Ascending aorta (tissue), 2 donors: ENCODE measurements at regions of chr12 and their contacts with region 1.

Region 1: DNA sequence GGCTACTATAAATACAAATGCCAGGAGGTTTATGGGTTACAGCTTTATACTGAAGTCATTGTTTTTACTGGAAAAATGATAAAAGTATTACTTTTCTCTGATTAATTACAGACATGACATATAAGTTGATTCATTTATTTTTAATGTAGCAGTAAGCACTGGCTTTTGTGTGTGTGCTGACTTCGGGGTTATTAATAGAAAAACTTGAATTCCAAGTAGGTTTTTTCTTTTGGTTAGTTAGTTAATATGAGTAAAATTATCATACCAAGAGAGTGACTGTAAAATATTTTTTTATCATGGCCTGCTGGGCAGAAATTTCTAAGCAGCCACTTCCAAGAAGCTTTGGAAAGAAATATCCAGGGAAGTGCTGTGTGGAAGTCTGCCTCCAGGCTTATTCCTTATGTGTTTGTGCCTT is 56.4 kb downstream of the IFT81 start:
- DNase-seq: no peak
- H3K4me3 ChIP-seq: no peak overlapping the region
- H3K27ac ChIP-seq: peak overlapping the region; percentile 57 to 80
- H3K4me1 ChIP-seq: peaks cover 5 to 32% of the 10 kb centered on the region in 2 donors
- H3K27me3 ChIP-seq: no peaks in the 10 kb centered on the region
- CTCF ChIP-seq: no peak

Region 2: DNA sequence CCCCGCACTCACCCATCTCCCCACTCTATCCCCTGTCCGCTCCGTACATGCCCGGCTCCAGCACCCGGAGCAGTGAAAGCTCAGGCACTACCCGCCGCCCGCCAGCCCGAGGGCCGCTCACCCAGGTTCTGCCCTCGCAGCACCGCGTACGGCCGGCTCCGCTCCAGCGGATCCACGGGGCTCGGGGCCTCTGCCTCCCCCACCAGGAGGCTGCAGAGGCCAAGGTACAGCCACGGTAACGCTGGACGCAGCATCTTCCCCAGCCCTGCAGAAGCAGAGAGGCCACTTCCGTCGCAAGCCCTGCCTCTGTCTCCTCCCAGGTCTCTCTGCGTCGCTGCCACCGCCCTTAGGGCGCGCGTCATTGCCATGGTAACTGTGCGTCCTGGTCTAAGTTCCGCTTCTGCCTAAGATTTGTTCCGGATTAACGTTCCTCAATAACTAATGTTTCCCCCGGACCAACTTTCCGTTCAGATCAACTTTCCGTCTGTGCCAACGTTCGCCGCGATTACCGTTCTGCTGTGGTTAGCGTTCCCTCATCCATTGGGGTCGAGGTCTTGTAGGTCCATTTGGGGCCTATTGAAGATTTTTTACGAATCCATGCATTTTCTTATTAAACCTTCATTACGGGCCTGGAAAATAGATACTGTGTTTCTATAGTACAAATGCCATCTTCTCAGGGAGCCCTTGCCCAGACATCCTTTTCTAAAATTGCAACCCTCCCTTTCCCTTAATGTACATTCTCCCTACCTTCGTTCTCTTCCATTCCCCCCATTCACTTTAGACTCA is 132.2 kb before region 1 on chr12 and contains the start of gene C12orf76:
- intact Hi-C with region 1: no loop called
- DNase-seq: peak; percentile 79 to 96
- H3K4me3 ChIP-seq: peak within 1 kb of the TSS; percentile 77 to 99
- H3K27ac ChIP-seq: peak within 1 kb of the TSS; percentile 51 to 77
- H3K4me1 ChIP-seq: peaks cover 0 to 13% of the 10 kb centered on the region in 2 donors
- H3K27me3 ChIP-seq: no peaks in the 10 kb centered on the region
- CTCF ChIP-seq: no peak
- total RNA-seq, gene C12orf76: 0.96 TPM

Region 3: GRCh38 chr12:110124184-110124995 is 56.2 kb before region 1 on chr12 and contains the start of gene IFT81:
- intact Hi-C with region 1: loop called (anchors 5 kb)
- DNase-seq: peak; percentile 71 to 97
- H3K4me3 ChIP-seq: peak within 1 kb of the TSS; percentile 92 to 93
- H3K27ac ChIP-seq: peak within 1 kb of the TSS; percentile 93
- H3K4me1 ChIP-seq: peaks cover 0 to 7% of the 10 kb centered on the region in 2 donors
- H3K27me3 ChIP-seq: no peaks in the 10 kb centered on the region
- CTCF ChIP-seq: peak in 1 of 3 experiments; percentile 16
- total RNA-seq, gene IFT81: 12.0 TPM

Region 4: GRCh38 chr12:110199339-110200123 is 18.9 kb after region 1 on chr12:
- intact Hi-C with region 1: no loop called
- DNase-seq: no peak
- H3K4me3 ChIP-seq: no peak overlapping the region
- H3K27ac ChIP-seq: no peak overlapping the region
- H3K4me1 ChIP-seq: no peaks in the 10 kb centered on the region
- H3K27me3 ChIP-seq: no peaks in the 10 kb centered on the region
- CTCF ChIP-seq: no peak

Region 5: DNA sequence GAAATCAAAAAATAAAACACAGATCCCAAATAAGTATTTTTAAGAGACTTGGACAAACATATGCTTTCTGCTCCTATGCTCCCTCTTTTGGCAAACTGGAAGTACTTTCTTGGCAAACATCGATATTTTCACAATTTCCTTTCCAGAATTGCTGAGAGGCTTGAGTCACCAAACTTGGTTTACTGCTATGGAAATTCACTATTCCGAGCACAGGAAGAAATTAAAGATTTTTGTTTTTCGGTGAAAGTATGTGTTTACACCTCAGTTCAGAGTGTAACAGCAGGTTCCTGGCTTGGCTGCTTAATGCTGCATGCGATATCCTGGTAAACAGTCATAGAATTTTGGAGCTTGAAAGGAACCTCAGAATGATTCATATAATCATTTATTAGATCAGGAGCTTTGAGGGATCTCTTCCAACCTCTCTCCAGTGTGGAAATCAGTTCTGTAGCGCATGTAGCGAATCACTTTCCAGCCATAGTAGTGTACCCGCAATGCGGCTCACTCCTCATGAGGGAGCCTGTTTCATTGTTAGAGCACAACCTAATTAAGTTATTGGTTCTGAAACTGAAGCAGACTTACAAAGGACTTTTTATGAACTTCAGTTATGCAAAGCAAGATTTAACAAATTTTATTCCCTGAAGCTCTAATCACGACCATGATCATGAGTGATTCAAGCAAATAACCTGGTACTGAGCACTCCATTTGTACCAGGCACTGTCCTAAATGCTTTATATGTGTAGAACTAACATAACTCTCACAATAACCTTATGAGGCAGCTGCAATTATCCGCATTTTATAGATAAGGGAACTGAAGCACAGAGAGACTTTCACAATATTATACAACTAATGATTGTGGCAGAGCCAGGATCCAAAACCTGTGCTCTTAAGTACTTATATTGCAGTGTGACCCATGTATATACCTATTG is 44.0 kb after region 1 on chr12:
- intact Hi-C with region 1: loop called (anchors 5 kb)
- DNase-seq: peak in 1 of 2 donors; percentile 69
- H3K4me3 ChIP-seq: peak overlapping the region; percentile 23 to 53
- H3K27ac ChIP-seq: peak overlapping the region; percentile 70 to 73
- H3K4me1 ChIP-seq: peaks cover 5 to 37% of the 10 kb centered on the region in 2 donors
- H3K27me3 ChIP-seq: no peaks in the 10 kb centered on the region
- CTCF ChIP-seq: peak; percentile 54 to 70 (median 61)